A549 (cell line): ENCODE measurements at regions of chr12 and their contacts with region 1.

Region 1: DNA sequence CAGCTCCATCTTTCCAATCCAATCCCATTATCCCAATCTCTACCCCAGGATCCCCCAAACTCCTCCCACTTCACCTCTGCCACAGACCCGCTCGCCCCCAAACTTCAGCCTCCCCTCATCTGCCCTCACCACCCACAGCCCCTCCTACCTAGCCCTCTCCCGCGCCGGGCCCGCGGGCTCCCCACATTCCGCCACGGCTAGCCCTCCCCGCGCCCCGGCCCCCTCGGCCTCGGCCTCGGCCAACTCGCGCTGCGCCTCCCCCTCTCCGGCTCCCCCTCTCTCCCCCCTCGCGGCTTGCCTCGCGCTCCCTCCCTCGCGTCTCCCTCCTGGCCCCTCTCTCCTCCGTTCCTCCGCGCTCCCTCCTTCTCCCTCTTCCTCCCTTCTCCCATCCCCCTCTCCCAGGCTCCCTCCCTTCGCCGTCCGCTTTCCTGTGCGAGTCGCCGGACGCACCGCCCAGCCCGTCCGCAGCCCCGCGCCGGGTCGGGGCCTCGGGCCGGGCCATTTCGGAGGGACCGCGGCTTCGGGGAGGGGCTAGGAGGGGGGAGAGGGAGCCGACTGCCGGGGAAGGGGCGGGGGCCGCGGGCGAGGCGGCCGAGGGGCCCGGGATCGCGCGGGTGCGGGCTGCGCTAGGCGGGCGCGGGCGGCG is at the start of gene ATN1:
- DNase-seq: peak; percentile 56 to 59
- ATAC-seq: peak; percentile 11 to 23; a peak in 5 of 6 replicates
- H3K4me3 ChIP-seq: peak within 1 kb of the TSS; percentile 93
- H3K27ac ChIP-seq: peak within 1 kb of the TSS; percentile 99 to 100
- H3K4me1 ChIP-seq: peaks cover 50% of the 10 kb centered on the region
- CTCF ChIP-seq: no peak
- EP300 ChIP-seq: no peak
- POLR2A ChIP-seq: peak; percentile 67
- RAD21 ChIP-seq: no peak
- polyA plus RNA-seq, gene ATN1: 11.3 and 23.1 TPM in 2 replicates

Region 2: GRCh38 chr12:6476489-6476888 is 451.0 kb before region 1 on chr12:
- CTCF ChIA-PET with region 1: no interaction called
- POLR2A ChIA-PET with region 1: no interaction called
- DNase-seq: no peak
- ATAC-seq: no peak
- H3K4me3 ChIP-seq: no peak overlapping the region
- H3K27ac ChIP-seq: no peak overlapping the region
- H3K4me1 ChIP-seq: peaks cover 8% of the 10 kb centered on the region
- CTCF ChIP-seq: no peak
- EP300 ChIP-seq: no peak
- POLR2A ChIP-seq: no peak
- RAD21 ChIP-seq: no peak

Region 3: GRCh38 chr12:6873094-6874014 is 54.1 kb before region 1 on chr12 and contains the start of gene SPSB2:
- CTCF ChIA-PET with region 1: interaction called, 183 read pairs
- POLR2A ChIA-PET with region 1: interaction called, 14 read pairs
- DNase-seq: peak; percentile 88 to 98
- ATAC-seq: peak; percentile 65 to 81
- H3K4me3 ChIP-seq: peak within 1 kb of the TSS; percentile 77
- H3K27ac ChIP-seq: peak within 1 kb of the TSS; percentile 93 to 94
- H3K4me1 ChIP-seq: peaks cover 42% of the 10 kb centered on the region
- CTCF ChIP-seq: no peak
- EP300 ChIP-seq: no peak
- POLR2A ChIP-seq: peak; percentile 82
- RAD21 ChIP-seq: peak; percentile 7 to 26; a peak in 3 of 5 replicates
- polyA plus RNA-seq, gene SPSB2: 15.3 and 16.8 TPM in 2 replicates

Region 4: GRCh38 chr12:6896846-6897435 is 30.6 kb before region 1 on chr12:
- CTCF ChIA-PET with region 1: interaction called, 65 read pairs
- POLR2A ChIA-PET with region 1: no interaction called
- DNase-seq: no peak
- ATAC-seq: no peak
- H3K4me3 ChIP-seq: no peak overlapping the region
- H3K27ac ChIP-seq: no peak overlapping the region
- H3K4me1 ChIP-seq: no peaks in the 10 kb centered on the region
- CTCF ChIP-seq: no peak
- EP300 ChIP-seq: no peak
- POLR2A ChIP-seq: no peak
- RAD21 ChIP-seq: no peak

Region 5: GRCh38 chr12:6914246-6914946 is 13.1 kb before region 1 on chr12 and contains the start of gene ENO2:
- CTCF ChIA-PET with region 1: interaction called, 370 read pairs
- POLR2A ChIA-PET with region 1: interaction called, 3 read pairs
- DNase-seq: peak; percentile 62 to 79
- ATAC-seq: peak; percentile 86 to 90
- H3K4me3 ChIP-seq: peak within 1 kb of the TSS; percentile 63
- H3K27ac ChIP-seq: peak within 1 kb of the TSS; percentile 74 to 93
- H3K4me1 ChIP-seq: peaks cover 17% of the 10 kb centered on the region
- CTCF ChIP-seq: no peak
- EP300 ChIP-seq: no peak
- POLR2A ChIP-seq: peak; percentile 39; the same call in 1 of the 2 replicates
- RAD21 ChIP-seq: no peak
- polyA plus RNA-seq, gene ENO2: 26.2 and 45.1 TPM in 2 replicates

Region 6: DNA sequence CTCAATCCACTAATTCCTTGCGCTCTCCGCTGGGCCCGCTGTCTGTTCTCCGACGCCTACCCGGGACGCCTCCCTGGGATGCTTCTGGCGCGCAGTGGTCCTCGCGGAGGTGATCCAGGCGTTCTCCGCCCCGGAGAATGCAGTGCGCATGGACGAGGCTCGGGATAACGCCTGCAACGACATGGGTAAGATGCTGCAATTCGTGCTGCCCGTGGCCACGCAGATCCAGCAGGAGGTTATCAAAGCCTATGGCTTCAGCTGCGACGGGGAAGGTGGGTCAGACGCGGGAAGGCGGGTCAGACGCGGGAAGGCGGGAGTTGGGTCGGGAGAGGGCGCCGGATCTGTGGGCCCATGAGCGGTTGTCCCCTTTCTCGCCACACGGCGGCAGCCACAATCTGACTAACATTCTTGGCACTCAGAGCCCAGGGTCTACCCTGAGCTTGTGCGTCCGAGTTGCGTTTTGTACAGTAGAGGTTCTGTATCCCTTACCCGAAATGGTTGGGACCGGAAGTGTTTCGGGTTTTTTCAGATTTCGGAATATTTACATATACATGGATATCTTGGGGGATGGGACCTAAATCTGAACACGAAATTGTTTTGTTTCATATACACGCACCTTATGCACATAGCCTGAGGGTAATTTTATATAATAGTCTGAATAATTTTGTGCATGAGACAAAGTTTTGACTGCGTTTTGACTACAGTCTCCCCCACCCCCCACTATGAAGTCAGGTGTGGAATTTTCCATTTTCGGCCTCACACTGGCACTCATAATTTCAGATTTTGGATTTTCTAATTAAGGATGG is 17.1 kb after region 1 on chr12:
- CTCF ChIA-PET with region 1: interaction called, 370 read pairs
- POLR2A ChIA-PET with region 1: interaction called, 41 read pairs
- DNase-seq: peak; percentile 93 to 97
- ATAC-seq: peak; percentile 52 to 73
- H3K4me3 ChIP-seq: peak overlapping the region; percentile 59
- H3K27ac ChIP-seq: peak overlapping the region; percentile 80 to 90
- H3K4me1 ChIP-seq: peaks cover 36% of the 10 kb centered on the region
- CTCF ChIP-seq: peak; percentile 85
- EP300 ChIP-seq: no peak
- POLR2A ChIP-seq: no peak; the same call in 1 of the 2 replicates
- RAD21 ChIP-seq: peak; percentile 87

Region 7: GRCh38 chr12:6965026-6965661 is 37.6 kb after region 1 on chr12:
- CTCF ChIA-PET with region 1: interaction called, 39 read pairs
- POLR2A ChIA-PET with region 1: interaction called, 4 read pairs
- DNase-seq: peak; percentile 92 to 93
- ATAC-seq: peak; percentile 64 to 77
- H3K4me3 ChIP-seq: no peak overlapping the region
- H3K27ac ChIP-seq: peak overlapping the region; percentile 50 to 99; a peak in 5 of 6 replicates
- H3K4me1 ChIP-seq: peaks cover 51% of the 10 kb centered on the region
- CTCF ChIP-seq: peak; percentile 89
- EP300 ChIP-seq: no peak
- POLR2A ChIP-seq: no peak
- RAD21 ChIP-seq: peak; percentile 59 to 67; a peak in 4 of 5 replicates